GM12878 (cell line): ENCODE measurements at regions of chr1 and their contacts with region 1.

Region 1: DNA sequence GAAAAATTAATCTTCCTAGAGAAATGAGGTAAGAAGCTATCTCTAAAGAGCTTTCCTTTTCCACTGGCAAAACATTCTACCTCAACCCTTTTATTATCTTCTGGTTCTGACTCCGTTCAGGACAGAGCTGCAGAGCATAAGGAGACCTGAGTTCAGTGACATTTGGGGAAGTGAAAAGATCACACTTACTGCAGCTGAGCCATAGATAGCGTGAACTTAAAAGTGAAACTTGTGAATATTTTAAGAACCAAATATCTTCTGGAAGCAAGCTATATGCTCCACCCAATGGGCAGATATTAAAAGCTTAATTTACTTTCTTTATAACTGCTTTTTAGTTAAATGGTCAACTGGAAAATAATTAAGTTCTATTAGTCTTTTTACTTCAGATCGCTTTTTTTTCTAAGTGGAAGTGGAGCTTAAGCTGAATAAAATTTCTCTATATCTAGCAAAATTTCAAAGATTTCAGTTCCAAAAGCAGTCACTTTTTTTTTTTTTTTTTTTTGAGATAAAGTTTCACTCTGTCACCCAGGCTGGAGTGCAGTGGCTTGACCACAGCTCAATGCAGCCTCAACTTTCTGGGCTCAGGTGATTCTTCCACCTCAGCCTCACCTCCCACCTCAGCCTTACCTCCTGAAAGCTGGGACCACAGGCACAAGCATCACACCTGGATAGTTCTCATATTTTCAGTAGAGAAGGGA is 11.9 kb downstream of the PTPN22 start:
- DNase-seq: peak; percentile 87
- ATAC-seq: peak; percentile 91
- H3K4me3 ChIP-seq: peak overlapping the region; percentile 51
- H3K27ac ChIP-seq: peak overlapping the region; percentile 84
- H3K4me1 ChIP-seq: peaks cover 50% of the 10 kb centered on the region
- H3K27me3 ChIP-seq: no peaks in the 10 kb centered on the region
- CTCF ChIP-seq: no peak; a peak in 1 of 6 replicates
- EP300 ChIP-seq: peak; percentile 30 to 91; a peak in 3 of 4 replicates
- POLR2A ChIP-seq: no peak
- RAD21 ChIP-seq: no peak

Region 2: GRCh38 chr1:113684153-113684541 is 175.5 kb before region 1 on chr1:
- CTCF ChIA-PET with region 1: no interaction called
- POLR2A ChIA-PET with region 1: no interaction called
- RAD21 ChIA-PET with region 1: no interaction called
- SMC1A ChIA-PET with region 1: no interaction called
- in situ Hi-C with region 1: no loop called
- intact Hi-C with region 1: no loop called
- DNase-seq: no peak
- ATAC-seq: no peak
- H3K4me3 ChIP-seq: no peak overlapping the region
- H3K27ac ChIP-seq: no peak overlapping the region
- H3K4me1 ChIP-seq: no peaks in the 10 kb centered on the region
- H3K27me3 ChIP-seq: no peaks in the 10 kb centered on the region
- CTCF ChIP-seq: no peak
- EP300 ChIP-seq: no peak
- POLR2A ChIP-seq: no peak
- RAD21 ChIP-seq: no peak

Region 3: DNA sequence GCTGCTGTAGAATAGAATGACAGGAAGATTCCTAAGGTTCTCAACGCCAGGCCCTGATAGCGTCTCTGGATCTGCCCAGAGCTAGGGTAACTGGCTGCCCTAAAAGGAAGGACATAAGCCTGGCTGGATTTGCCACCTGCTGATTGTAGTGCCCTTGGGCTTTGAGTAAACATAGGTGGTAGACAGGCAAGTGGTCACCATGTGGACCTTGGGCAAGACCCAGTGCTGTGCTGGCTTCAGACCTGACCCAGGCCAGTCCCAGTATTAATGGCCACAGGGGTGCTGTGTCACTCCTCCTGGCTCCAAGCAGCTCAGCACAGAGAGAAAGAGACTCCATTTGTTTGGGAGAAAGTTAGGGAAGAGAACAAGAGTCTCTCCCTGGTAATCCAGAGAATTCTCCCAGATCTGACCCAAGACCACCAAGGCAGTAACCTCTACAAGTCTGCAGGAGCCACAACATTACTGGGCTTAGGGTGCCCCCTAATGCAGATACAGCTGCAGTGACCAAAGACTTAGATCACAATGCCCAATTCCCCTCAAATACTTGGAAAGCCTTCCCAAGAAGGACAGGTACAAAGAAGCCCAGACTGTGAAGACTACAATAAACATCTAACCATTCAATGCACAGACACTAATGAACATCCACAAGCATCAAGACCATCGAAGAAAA is 144.9 kb before region 1 on chr1:
- CTCF ChIA-PET with region 1: no interaction called
- POLR2A ChIA-PET with region 1: no interaction called
- RAD21 ChIA-PET with region 1: no interaction called
- SMC1A ChIA-PET with region 1: no interaction called
- in situ Hi-C with region 1: no loop called
- intact Hi-C with region 1: no loop called
- DNase-seq: no peak
- ATAC-seq: no peak
- H3K4me3 ChIP-seq: no peak overlapping the region
- H3K27ac ChIP-seq: no peak overlapping the region
- H3K4me1 ChIP-seq: no peaks in the 10 kb centered on the region
- H3K27me3 ChIP-seq: no peaks in the 10 kb centered on the region
- CTCF ChIP-seq: no peak
- EP300 ChIP-seq: no peak
- POLR2A ChIP-seq: no peak
- RAD21 ChIP-seq: no peak

Region 4: DNA sequence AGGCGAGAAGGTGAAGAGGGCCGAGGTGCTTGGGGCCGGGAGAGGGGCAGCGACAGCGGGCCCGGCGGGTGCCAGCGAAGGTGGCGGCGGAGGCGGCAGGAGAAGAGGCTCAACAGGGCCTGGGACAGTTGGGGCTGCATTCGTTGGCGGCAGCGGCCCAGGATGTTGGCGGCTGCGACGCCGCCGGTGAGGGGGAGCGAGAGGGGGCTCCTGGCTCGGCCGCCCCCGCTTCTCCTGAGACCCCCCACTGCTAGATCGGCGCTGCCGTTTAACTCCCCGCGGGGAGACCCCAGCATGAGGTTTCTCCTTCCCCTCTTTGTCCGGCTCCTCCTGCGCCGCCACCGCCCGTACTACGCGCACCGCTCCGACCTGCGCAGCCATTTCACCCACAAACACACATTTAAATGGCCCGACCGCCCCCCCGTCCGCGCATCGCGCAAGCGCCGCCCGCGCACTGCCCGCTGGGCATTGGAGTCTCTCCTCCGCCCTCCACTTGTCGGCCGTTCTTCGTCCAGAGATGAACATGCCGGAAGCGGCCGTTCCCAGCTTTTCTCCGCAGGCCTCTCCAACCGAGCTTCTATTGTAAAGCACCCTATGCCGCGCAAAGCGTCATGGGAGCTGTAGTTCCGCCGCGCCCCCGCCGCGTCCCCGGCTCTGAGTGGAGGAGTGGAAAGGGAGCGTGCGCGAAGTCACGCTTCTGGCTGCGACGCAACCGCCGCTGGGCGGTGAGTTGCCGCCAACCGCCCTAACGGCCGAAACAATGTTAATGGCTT is 47.6 kb before region 1 on chr1 and contains the start of gene RSBN1:
- CTCF ChIA-PET with region 1: no interaction called
- POLR2A ChIA-PET with region 1: interaction called, 10 read pairs
- RAD21 ChIA-PET with region 1: interaction called, 4 read pairs
- SMC1A ChIA-PET with region 1: interaction called, 5 read pairs
- in situ Hi-C with region 1: no loop called
- intact Hi-C with region 1: no loop called
- DNase-seq: peak; percentile 96
- ATAC-seq: peak; percentile 92
- H3K4me3 ChIP-seq: peak within 1 kb of the TSS; percentile 92
- H3K27ac ChIP-seq: peak within 1 kb of the TSS; percentile 72
- H3K4me1 ChIP-seq: no peaks in the 10 kb centered on the region
- H3K27me3 ChIP-seq: no peaks in the 10 kb centered on the region
- CTCF ChIP-seq: no peak
- EP300 ChIP-seq: peak in 1 of 2 experiments; percentile 80; a peak in 2 of 4 replicates
- POLR2A ChIP-seq: peak; percentile 96
- RAD21 ChIP-seq: no peak
- polyA plus RNA-seq, gene RSBN1: 2.9 to 10.5 TPM

Region 5: DNA sequence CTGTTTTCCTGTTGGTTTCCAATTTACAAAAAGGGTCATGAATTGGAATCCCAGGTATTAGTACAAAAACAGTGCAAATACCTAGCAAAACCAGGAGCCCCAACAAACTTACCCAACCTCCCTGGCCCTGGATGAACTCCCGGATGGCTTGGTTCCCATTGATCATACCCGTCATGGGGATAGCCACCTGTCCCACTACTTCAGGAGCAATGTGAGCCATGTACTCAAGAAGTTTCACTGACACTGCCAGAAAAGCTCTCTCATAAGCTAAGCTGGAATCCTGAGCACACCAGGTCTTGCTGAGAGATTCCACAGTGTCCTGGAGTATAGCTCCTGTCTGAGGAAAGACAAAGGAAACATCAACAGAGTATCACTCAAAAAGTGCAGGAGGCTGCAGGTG is 22.0 kb after region 1 on chr1:
- CTCF ChIA-PET with region 1: interaction called, 56 read pairs
- POLR2A ChIA-PET with region 1: interaction called, 111 read pairs
- RAD21 ChIA-PET with region 1: interaction called, 189 read pairs
- SMC1A ChIA-PET with region 1: interaction called, 396 read pairs
- in situ Hi-C with region 1: no loop called
- intact Hi-C with region 1: no loop called
- DNase-seq: no peak
- ATAC-seq: no peak
- H3K4me3 ChIP-seq: no peak overlapping the region
- H3K27ac ChIP-seq: peak overlapping the region; percentile 40
- H3K4me1 ChIP-seq: peaks cover 28% of the 10 kb centered on the region
- H3K27me3 ChIP-seq: no peaks in the 10 kb centered on the region
- CTCF ChIP-seq: no peak
- EP300 ChIP-seq: no peak
- POLR2A ChIP-seq: no peak
- RAD21 ChIP-seq: no peak

Region 6: DNA sequence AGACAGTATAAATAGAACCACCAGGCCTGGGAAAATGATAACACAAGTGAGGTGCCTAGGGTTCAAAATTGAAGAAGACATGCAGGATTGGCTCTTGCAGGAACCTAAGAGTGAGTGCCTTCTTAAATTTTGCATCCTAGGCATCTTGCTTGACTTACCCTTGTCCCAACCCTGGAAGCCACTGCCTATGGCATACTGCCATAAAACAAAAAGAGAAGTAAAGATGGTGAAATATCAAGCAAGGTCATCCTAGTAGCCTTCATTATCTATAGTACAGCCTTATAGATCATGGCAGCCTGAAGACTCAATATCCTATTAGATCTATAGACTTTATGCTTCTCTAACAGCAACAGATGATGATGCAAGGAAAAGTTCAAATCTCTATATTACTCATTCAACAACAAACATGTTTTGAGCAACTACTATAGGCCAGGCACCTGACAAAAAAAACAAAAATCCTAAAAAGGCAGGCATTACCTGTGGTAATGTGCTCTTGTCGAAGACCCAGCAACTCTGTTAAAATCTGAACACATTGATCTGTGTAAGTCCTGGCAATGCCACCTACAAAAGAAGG is 38.7 kb after region 1 on chr1:
- CTCF ChIA-PET with region 1: interaction called, 50 read pairs
- POLR2A ChIA-PET with region 1: interaction called, 68 read pairs
- RAD21 ChIA-PET with region 1: interaction called, 110 read pairs
- SMC1A ChIA-PET with region 1: interaction called, 101 read pairs
- in situ Hi-C with region 1: no loop called
- intact Hi-C with region 1: no loop called
- DNase-seq: no peak
- ATAC-seq: no peak; the same call in 2 of the 3 replicates
- H3K4me3 ChIP-seq: no peak overlapping the region
- H3K27ac ChIP-seq: no peak overlapping the region
- H3K4me1 ChIP-seq: no peaks in the 10 kb centered on the region
- H3K27me3 ChIP-seq: no peaks in the 10 kb centered on the region
- CTCF ChIP-seq: no peak
- EP300 ChIP-seq: no peak
- POLR2A ChIP-seq: no peak
- RAD21 ChIP-seq: no peak

Region 7: GRCh38 chr1:113940365-113941244 is 81.0 kb after region 1 on chr1:
- CTCF ChIA-PET with region 1: interaction called, 5 read pairs
- POLR2A ChIA-PET with region 1: interaction called, 3 read pairs
- RAD21 ChIA-PET with region 1: interaction called, 13 read pairs
- SMC1A ChIA-PET with region 1: interaction called, 5 read pairs
- in situ Hi-C with region 1: no loop called
- intact Hi-C with region 1: loop called (anchors 5 kb)
- DNase-seq: no peak
- ATAC-seq: peak; percentile 81
- H3K4me3 ChIP-seq: peak overlapping the region; percentile 21; the same call in 1 of the 2 replicates
- H3K27ac ChIP-seq: peak overlapping the region; percentile 7
- H3K4me1 ChIP-seq: peaks cover 17% of the 10 kb centered on the region
- H3K27me3 ChIP-seq: no peaks in the 10 kb centered on the region
- CTCF ChIP-seq: no peak
- EP300 ChIP-seq: no peak
- POLR2A ChIP-seq: no peak
- RAD21 ChIP-seq: no peak

Region 8: DNA sequence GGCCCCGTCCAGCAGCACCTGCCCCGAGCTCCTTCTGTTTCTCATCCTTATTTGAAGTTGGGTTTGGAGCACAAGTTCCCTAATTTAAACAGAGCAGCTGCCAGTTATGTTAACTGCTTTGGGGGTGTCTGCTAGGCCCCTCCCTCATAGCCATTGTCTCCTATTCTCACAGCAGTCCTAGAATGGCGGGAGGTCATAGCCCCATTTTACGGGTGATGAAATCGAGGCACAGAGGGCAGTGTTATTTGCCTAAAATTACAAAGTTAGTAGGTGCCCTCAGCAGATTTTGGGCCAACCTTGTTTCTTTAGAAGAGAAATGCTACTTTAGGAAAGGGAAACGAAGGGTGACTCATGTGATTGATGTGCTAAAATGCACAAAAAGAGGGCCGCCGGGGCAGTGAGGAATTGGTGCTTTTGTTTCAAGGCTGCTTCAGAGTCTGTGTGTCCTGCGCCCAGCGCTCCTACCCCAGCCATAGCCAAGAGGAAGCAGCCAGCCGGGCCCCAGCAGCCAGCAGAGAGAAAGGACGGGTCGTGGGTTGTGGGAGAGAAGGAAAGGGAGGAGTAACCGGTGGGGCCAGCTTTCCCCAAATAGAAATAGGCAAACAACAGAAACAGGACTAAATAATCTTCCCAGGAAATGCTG is 1795.2 kb after region 1 on chr1:
- CTCF ChIA-PET with region 1: no interaction called
- POLR2A ChIA-PET with region 1: no interaction called
- RAD21 ChIA-PET with region 1: no interaction called
- SMC1A ChIA-PET with region 1: no interaction called
- in situ Hi-C with region 1: no loop called
- intact Hi-C with region 1: no loop called
- DNase-seq: no peak
- ATAC-seq: no peak
- H3K4me3 ChIP-seq: no peak overlapping the region
- H3K27ac ChIP-seq: no peak overlapping the region
- H3K4me1 ChIP-seq: peaks cover 13% of the 10 kb centered on the region
- H3K27me3 ChIP-seq: no peaks in the 10 kb centered on the region
- CTCF ChIP-seq: no peak
- EP300 ChIP-seq: no peak
- POLR2A ChIP-seq: no peak
- RAD21 ChIP-seq: no peak